ENCODE measurements at regions of chr5 and their contacts with region 1.

Region 1: GRCh38 chr5:141512390-141512910 is 23.6 kb downstream of the PCDHGC5 start:
- DNase-seq: peak; percentile 66
- ATAC-seq: no peak
- H3K4me3 Mint-ChIP-seq: peak overlapping the region; percentile 85
- H3K27ac Mint-ChIP-seq: peak overlapping the region; percentile 20
- H3K4me1 Mint-ChIP-seq: peaks cover 84% of the 10 kb centered on the region
- H3K27me3 Mint-ChIP-seq: no peaks in the 10 kb centered on the region
- CTCF ChIP-seq: peak; percentile 37

Region 2: DNA sequence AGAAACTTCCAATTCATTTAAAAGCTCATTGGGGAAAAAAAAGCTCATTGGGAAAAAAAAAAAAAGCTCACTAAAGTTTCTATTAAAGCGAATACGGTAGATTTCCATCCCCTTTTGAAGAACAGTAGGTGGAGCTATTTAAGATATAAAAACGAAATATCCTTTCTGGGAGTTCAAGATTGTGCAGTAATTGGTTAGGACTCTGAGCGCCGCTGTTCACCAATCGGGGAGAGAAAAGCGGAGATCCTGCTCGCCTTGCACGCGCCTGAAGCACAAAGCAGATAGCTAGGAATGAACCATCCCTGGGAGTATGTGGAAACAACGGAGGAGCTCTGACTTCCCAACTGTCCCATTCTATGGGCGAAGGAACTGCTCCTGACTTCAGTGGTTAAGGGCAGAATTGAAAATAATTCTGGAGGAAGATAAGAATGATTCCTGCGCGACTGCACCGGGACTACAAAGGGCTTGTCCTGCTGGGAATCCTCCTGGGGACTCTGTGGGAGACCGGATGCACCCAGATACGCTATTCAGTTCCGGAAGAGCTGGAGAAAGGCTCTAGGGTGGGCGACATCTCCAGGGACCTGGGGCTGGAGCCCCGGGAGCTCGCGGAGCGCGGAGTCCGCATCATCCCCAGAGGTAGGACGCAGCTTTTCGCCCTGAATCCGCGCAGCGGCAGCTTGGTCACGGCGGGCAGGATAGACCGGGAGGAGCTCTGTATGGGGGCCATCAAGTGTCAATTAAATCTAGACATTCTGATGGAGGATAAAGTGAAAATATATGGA is 81.9 kb before region 1 on chr5 and contains the start of gene PCDHGA12:
- CTCF ChIA-PET with region 1: interaction called, 15 read pairs
- POLR2A ChIA-PET with region 1: interaction called, 3 read pairs
- intact Hi-C with region 1: loop called (anchors 2 kb)
- DNase-seq: no peak
- ATAC-seq: peak; percentile 86
- H3K4me3 Mint-ChIP-seq: peak within 1 kb of the TSS; percentile 80
- H3K27ac Mint-ChIP-seq: peak within 1 kb of the TSS; percentile 76
- H3K4me1 Mint-ChIP-seq: peaks cover 16% of the 10 kb centered on the region
- H3K27me3 Mint-ChIP-seq: peaks cover 46% of the 10 kb centered on the region
- CTCF ChIP-seq: no peak
- total RNA-seq, gene PCDHGA12: 1.3 and 1.6 TPM in 2 replicates

Region 3: DNA sequence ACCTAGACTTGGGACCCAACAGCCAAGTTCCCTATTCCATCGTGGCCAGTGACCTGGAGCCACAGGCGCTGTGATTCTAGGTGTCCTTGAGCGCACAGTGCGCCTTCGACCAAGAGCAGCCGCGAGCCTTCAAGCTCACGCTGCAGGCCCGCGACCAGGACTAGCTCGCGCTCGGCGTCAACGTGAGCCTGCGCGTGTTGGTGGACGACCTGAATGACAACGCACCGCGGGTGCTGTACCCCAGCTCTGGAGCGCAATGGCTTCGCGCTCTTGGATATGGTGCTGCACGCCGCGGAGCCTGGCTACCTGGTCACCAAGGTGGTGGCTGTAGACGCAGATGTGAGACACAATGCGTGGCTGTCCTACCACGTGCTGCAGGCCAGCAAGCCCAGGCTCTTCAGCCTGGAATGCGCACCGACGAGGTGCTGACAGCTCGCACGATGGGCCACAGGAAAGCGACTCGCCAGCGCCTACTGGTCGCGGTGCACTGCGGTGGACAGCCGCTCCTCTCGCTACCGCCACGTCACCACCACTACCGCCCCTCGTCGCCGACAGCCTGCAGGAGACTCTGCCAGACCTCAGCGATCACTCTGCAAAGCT is 70.8 kb before region 1 on chr5:
- CTCF ChIA-PET with region 1: no interaction called
- POLR2A ChIA-PET with region 1: no interaction called
- intact Hi-C with region 1: no loop called
- DNase-seq: no peak
- ATAC-seq: no peak
- H3K4me3 Mint-ChIP-seq: no peak overlapping the region
- H3K27ac Mint-ChIP-seq: no peak overlapping the region
- H3K4me1 Mint-ChIP-seq: peaks cover 4% of the 10 kb centered on the region
- H3K27me3 Mint-ChIP-seq: peaks cover 1% of the 10 kb centered on the region
- CTCF ChIP-seq: no peak

Region 4: DNA sequence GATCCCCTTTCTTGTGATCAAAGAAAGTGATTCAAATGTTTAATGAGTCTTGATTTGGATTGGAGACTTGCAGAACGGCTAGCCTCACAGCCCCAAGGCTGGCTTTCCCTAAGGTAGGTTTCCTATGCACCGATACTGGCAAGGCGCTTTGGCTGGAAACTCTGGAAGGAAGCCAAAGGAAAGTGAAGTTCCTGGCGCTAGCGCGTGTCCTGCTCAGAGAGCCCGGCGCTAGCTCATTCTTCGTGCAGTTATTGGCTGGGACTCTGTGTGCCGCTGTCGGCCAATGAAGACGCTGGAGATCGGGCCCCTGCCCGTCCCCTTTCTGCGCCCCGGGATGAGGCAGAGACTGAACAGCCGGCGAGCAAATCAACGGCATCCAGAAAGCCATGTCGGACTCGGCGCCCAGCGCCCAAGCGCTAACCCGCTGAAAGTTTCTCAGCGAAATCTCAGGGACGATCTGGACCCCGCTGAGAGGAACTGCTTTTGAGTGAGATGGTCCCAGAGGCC is 36.8 kb before region 1 on chr5 and contains the start of gene PCDHGC3:
- CTCF ChIA-PET with region 1: interaction called, 7 read pairs
- POLR2A ChIA-PET with region 1: no interaction called
- intact Hi-C with region 1: loop called (anchors 2 kb)
- DNase-seq: no peak
- ATAC-seq: peak; percentile 96
- H3K4me3 Mint-ChIP-seq: peak within 1 kb of the TSS; percentile 93
- H3K27ac Mint-ChIP-seq: peak within 1 kb of the TSS; percentile 32
- H3K4me1 Mint-ChIP-seq: peaks cover 28% of the 10 kb centered on the region
- H3K27me3 Mint-ChIP-seq: peaks cover 32% of the 10 kb centered on the region
- CTCF ChIP-seq: no peak
- total RNA-seq, gene PCDHGC3: 2.6 and 3.3 TPM in 2 replicates

Region 5: DNA sequence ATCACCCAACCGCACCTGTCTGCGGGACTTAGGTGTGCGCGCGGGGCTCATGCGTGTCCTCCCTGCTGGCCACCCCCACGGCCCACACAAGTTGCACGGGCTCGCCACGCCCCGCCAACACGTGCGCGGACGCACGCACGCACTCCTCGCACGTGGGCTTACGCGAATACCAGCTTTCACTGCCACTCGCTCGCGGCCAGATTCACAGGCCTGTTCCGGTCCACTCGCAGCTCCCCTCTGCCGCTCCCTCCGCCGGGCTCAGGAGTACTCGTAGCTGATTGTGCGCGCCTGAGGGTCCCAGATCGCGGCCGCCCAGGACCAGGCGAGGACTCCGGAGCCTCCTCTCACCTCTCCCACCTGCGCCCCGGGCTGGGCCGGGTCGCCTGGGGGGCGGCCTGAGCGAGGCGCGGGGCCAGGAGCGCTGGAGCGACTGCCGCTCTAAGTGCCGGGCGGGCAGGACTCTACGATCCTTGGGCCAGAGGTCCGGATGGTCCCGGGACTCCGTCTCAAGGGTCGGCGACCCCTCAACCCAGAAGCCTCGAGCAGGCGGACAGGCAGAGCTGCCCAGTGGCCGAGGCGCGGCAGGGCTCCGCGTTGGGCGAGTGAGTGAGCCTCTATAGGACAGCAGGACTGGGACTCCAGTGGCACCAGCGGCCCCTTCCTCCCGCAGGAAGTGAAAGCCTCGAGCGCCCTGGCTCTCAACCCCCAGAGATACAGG is 20.1 kb before region 1 on chr5:
- CTCF ChIA-PET with region 1: interaction called, 7 read pairs
- POLR2A ChIA-PET with region 1: interaction called, 9 read pairs
- intact Hi-C with region 1: loop called (anchors 1 kb)
- DNase-seq: no peak
- ATAC-seq: peak; percentile 70
- H3K4me3 Mint-ChIP-seq: peak overlapping the region; percentile 81
- H3K27ac Mint-ChIP-seq: no peak overlapping the region
- H3K4me1 Mint-ChIP-seq: peaks cover 18% of the 10 kb centered on the region
- H3K27me3 Mint-ChIP-seq: peaks cover 38% of the 10 kb centered on the region
- CTCF ChIP-seq: no peak

Measured in activated B cell treated with CpG ODN at 0.5 μM for 24 hours (primary cell).